PC-9 (cell line): ENCODE measurements at regions of chr1 and their contacts with region 1.

Region 1: GRCh38 chr1:235504496-235505222 is 407 bp upstream of the B3GALNT2 start:
- DNase-seq: peak; percentile 93 to 100
- H3K4me3 ChIP-seq: peak overlapping the region; percentile 77
- H3K27ac ChIP-seq: peak overlapping the region; percentile 97
- H3K4me1 ChIP-seq: peaks cover 38% of the 10 kb centered on the region
- H3K27me3 ChIP-seq: no peaks in the 10 kb centered on the region
- CTCF ChIP-seq: peak; percentile 86

Region 2: GRCh38 chr1:234123867-234124266 is 1380.8 kb before region 1 on chr1:
- CTCF ChIA-PET with region 1: interaction called, 13 read pairs
- POLR2A ChIA-PET with region 1: no interaction called
- intact Hi-C with region 1: no loop called
- DNase-seq: no peak
- H3K4me3 ChIP-seq: no peak overlapping the region
- H3K27ac ChIP-seq: no peak overlapping the region
- H3K4me1 ChIP-seq: no peaks in the 10 kb centered on the region
- H3K27me3 ChIP-seq: no peaks in the 10 kb centered on the region
- CTCF ChIP-seq: no peak

Region 3: GRCh38 chr1:235160957-235161684 is 343.5 kb before region 1 on chr1 and contains the start of gene RBM34:
- CTCF ChIA-PET with region 1: interaction called, 5 read pairs
- POLR2A ChIA-PET with region 1: no interaction called
- intact Hi-C with region 1: loop called (anchors 2 kb)
- DNase-seq: peak; percentile 80 to 95
- H3K4me3 ChIP-seq: peak within 1 kb of the TSS; percentile 73
- H3K27ac ChIP-seq: peak within 1 kb of the TSS; percentile 85
- H3K4me1 ChIP-seq: peaks cover 16% of the 10 kb centered on the region
- H3K27me3 ChIP-seq: no peaks in the 10 kb centered on the region
- CTCF ChIP-seq: no peak
- total RNA-seq, gene RBM34: 101 and 106 TPM in 2 replicates

Region 4: GRCh38 chr1:235527196-235527814 is 22.6 kb after region 1 on chr1:
- CTCF ChIA-PET with region 1: no interaction called
- POLR2A ChIA-PET with region 1: no interaction called
- intact Hi-C with region 1: no loop called
- DNase-seq: no peak
- H3K4me3 ChIP-seq: no peak overlapping the region
- H3K27ac ChIP-seq: no peak overlapping the region
- H3K4me1 ChIP-seq: peaks cover 4% of the 10 kb centered on the region; the same call in 1 of the 2 replicates
- H3K27me3 ChIP-seq: no peaks in the 10 kb centered on the region
- CTCF ChIP-seq: no peak

Region 5: GRCh38 chr1:235708390-235708962 is 203.8 kb after region 1 on chr1:
- CTCF ChIA-PET with region 1: no interaction called
- POLR2A ChIA-PET with region 1: no interaction called
- intact Hi-C with region 1: loop called (anchors 2 kb)
- DNase-seq: peak; percentile 58 to 82
- H3K4me3 ChIP-seq: no peak overlapping the region
- H3K27ac ChIP-seq: peak overlapping the region; percentile 88
- H3K4me1 ChIP-seq: peaks cover 54% of the 10 kb centered on the region
- H3K27me3 ChIP-seq: no peaks in the 10 kb centered on the region
- CTCF ChIP-seq: no peak

Region 6: DNA sequence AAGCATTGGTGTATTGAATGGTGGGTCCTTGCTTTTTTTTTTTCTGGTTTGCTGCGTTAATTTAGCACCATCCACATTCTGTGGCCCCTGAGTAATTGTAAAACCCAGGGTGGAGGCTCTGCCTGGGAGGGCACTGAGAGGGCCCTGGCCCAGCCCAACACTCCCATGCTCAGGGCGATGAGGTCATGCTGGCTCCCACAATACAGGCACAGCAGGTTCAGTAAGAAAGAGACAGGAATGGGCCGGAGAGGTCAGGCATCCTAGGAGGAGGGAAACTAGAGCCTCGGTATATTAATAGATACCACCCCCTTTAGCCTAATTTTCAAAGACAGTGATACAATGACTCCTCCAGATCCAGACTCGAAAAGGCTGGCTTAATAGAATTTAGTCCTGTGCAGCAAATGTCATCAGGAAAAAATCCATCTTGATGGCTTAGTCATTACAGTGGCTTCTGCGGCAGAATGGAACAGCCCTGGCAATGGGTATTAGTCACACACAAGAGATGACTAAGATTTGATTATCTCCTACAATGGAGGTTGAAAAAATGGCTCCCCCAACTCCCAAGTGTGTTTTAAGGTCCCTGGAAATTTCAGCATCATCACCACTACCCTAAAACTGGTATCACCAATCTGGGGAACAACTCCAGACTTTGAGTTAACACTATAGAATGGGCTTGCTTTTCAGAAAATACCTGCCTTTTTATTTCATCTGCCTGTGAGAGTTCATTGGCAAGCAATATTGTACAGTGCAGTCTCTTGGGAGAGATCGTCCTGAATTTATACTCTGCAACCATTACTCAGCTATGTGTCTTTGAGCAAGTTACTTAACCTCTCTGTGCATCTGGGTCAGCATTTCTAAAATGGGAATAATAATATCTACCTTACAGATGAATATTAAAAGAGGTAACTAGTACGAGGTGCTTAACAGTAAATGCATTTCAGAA is 406.0 kb after region 1 on chr1:
- CTCF ChIA-PET with region 1: no interaction called
- POLR2A ChIA-PET with region 1: no interaction called
- intact Hi-C with region 1: loop called (anchors 2 kb)
- DNase-seq: peak; percentile 93 to 97
- H3K4me3 ChIP-seq: peak overlapping the region; percentile 45; the same call in 1 of the 2 replicates
- H3K27ac ChIP-seq: peak overlapping the region; percentile 99
- H3K4me1 ChIP-seq: peaks cover 78% of the 10 kb centered on the region
- H3K27me3 ChIP-seq: no peaks in the 10 kb centered on the region
- CTCF ChIP-seq: no peak

Region 7: GRCh38 chr1:236103646-236104218 is 599.1 kb after region 1 on chr1:
- CTCF ChIA-PET with region 1: no interaction called
- POLR2A ChIA-PET with region 1: no interaction called
- intact Hi-C with region 1: loop called (anchors 10 kb)
- DNase-seq: peak in 1 of 2 experiments; percentile 41
- H3K4me3 ChIP-seq: no peak overlapping the region
- H3K27ac ChIP-seq: no peak overlapping the region
- H3K4me1 ChIP-seq: no peaks in the 10 kb centered on the region
- H3K27me3 ChIP-seq: no peaks in the 10 kb centered on the region
- CTCF ChIP-seq: peak; percentile 96